Aorta (tissue), 5 donors: ENCODE measurements at regions of chr3 and their contacts with region 1.

Region 1: DNA sequence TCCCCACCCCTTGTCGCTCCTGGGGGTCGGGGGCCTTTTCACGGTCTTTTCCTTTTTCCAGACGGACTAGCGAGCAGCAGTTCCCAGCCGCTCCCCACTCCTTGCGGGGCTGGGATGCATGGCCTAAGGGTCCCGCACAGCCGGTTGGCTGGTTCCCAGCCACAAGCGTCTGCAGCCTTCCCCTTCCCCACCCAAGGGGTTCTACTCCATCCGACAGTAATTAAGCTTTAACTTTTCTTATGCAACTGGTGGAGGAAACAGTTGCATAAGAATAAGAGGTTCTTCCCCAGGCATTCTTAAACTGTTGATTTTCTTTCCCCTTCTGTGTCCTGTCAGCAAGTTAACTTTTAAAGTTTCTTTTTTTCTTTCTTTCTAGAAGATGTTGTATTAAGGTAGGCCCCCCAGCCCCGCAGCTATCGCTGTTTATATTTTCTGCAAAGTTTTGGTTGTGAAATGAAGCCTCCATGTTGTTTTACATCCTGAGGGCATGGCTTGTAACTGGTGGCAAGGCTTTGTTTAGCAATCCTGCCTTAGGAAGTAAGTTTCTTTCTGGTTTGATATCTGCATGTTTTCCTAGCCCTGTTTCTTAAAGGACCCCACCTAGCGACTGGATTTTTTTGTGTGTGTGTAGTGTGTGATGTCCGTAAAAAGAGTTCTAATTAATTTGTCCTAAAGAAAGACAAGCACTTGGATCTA is 207.5 kb downstream of the ZNF385D start:
- DNase-seq: no peak
- ATAC-seq: no peak
- H3K4me3 ChIP-seq: no peak overlapping the region
- H3K27ac ChIP-seq: no peak overlapping the region
- H3K4me1 ChIP-seq: peaks cover 0 to 3% of the 10 kb centered on the region in 2 donors
- H3K27me3 ChIP-seq: no peaks in the 10 kb centered on the region

Region 2: DNA sequence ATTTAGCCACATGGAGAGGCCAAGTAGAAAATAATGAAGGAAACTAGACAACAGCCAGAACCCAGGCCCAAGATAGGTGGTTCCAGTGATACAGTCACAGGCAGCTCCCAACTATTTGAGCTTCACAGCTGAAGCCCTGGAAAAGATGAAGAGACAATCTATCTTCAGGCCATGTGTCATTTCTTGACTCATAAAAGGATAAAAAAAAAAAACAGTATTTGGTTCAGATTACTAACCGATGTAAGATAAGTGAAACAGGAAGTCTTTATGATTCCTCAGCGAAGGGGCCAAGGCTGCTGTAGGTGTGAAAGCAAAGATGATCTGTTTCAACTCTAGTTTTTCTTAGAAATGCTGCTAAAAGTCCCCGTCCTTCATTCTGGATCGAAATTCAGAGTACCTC is 187.1 kb before region 1 on chr3:
- intact Hi-C with region 1: no loop called
- DNase-seq: no peak
- ATAC-seq: no peak
- H3K4me3 ChIP-seq: no peak overlapping the region
- H3K27ac ChIP-seq: no peak overlapping the region
- H3K4me1 ChIP-seq: no peaks in the 10 kb centered on the region
- H3K27me3 ChIP-seq: no peaks in the 10 kb centered on the region

Region 3: DNA sequence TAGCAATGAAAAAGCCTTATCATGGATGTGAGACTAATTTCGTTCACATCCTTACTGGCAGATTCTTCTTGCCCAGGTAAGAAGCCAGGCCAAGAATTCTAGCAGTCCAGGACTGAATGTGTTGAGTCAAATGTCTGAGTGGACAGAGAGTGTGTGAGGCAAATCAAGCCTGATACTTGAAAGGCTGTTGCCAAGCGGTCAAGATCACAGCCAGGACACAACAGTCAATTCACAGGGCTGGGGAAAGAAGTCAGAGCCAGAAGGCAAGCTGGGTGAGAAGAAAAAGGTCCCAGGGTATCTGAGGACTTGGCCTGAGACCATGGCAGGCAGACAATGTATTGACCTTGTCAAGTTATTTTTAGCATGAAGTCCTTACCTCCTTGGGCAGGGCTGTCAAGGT is 93.8 kb before region 1 on chr3:
- intact Hi-C with region 1: loop called in 1 of 2 experiments (anchors 5 kb)
- DNase-seq: no peak
- ATAC-seq: no peak
- H3K4me3 ChIP-seq: no peak overlapping the region
- H3K27ac ChIP-seq: peak overlapping the region in 1 of 2 donors; percentile 57
- H3K4me1 ChIP-seq: peaks cover 2 to 12% of the 10 kb centered on the region in 2 donors
- H3K27me3 ChIP-seq: no peaks in the 10 kb centered on the region